Sigmoid colon (tissue), 7 donors: ENCODE measurements at regions of chr15 and their contacts with region 1.

Region 1: GRCh38 chr15:46622851-46623250 is 988.0 kb downstream of the SQOR start:
- DNase-seq: no peak
- H3K4me3 ChIP-seq: no peak overlapping the region
- H3K27ac ChIP-seq: no peak overlapping the region
- H3K4me1 ChIP-seq: no peaks in the 10 kb centered on the region
- H3K27me3 ChIP-seq: no peaks in the 10 kb centered on the region
- CTCF ChIP-seq: no peak
- EP300 ChIP-seq: no peak
- POLR2A ChIP-seq: no peak

Region 2: DNA sequence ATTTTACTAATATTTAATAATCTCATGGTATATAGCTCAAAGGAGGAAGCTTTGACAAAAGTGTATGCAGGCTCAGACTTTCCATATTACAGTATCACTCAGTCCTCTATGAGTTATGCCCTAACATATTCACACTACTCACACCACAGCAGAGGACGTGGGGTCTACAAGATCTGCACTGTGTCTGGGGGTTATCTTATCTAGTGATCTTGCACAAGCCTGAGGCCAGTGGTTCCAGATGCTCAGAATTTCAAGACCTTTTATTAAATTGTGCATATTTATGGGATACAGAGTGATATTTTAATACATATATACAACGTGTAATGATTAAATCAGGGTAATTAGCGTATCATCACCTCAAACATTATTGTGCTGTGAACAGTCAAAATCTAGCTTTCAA is 54.9 kb before region 1 on chr15:
- intact Hi-C with region 1: loop called (anchors 10 kb)
- DNase-seq: no peak
- H3K4me3 ChIP-seq: no peak overlapping the region
- H3K27ac ChIP-seq: no peak overlapping the region
- H3K4me1 ChIP-seq: no peaks in the 10 kb centered on the region
- H3K27me3 ChIP-seq: no peaks in the 10 kb centered on the region
- CTCF ChIP-seq: no peak
- EP300 ChIP-seq: no peak
- POLR2A ChIP-seq: no peak